Tibial artery (tissue), 4 donors: ENCODE measurements at regions of chr22 and their contacts with region 1.

Region 1: DNA sequence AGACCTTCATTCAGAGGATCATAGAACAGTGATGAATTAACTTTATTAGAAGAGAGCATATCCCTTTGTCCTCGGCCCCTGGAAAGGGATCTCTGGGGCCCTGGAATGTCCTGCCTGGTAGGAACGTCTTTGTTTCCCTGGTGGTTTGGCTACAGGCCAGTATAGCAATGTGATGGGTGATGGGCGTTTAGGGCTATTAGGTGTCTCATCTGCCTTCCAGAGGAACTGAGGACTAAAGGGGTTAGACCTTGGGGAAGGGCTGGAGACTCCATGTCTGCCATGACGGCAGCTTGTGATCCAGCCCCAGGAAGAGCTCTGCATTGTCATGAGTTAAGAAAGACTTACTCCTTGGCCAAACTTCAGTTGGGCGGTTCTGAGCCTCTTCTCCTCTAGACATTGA is 9.0 kb downstream of the APOL4 start:
- DNase-seq: no peak
- H3K4me3 ChIP-seq: no peak overlapping the region
- H3K27ac ChIP-seq: no peak overlapping the region
- H3K4me1 ChIP-seq: peaks cover 0 to 12% (median 4%) of the 10 kb centered on the region in 4 donors
- H3K27me3 ChIP-seq: no peaks in the 10 kb centered on the region
- CTCF ChIP-seq: no peak

Region 2: GRCh38 chr22:36017651-36018091 is 174.9 kb before region 1 on chr22:
- intact Hi-C with region 1: no loop called
- DNase-seq: no peak
- H3K4me3 ChIP-seq: no peak overlapping the region
- H3K27ac ChIP-seq: no peak overlapping the region
- H3K4me1 ChIP-seq: peaks cover 0 to 51% (median 22%) of the 10 kb centered on the region in 4 donors
- H3K27me3 ChIP-seq: no peaks in the 10 kb centered on the region
- CTCF ChIP-seq: no peak

Region 3: GRCh38 chr22:36180038-36180880 is 12.3 kb before region 1 on chr22:
- intact Hi-C with region 1: no loop called
- DNase-seq: peak; percentile 89 to 91
- H3K4me3 ChIP-seq: no peak overlapping the region
- H3K27ac ChIP-seq: no peak overlapping the region
- H3K4me1 ChIP-seq: peaks cover 0 to 3% (median 0%) of the 10 kb centered on the region in 4 donors
- H3K27me3 ChIP-seq: no peaks in the 10 kb centered on the region
- CTCF ChIP-seq: peak; percentile 89 to 94

Region 4: DNA sequence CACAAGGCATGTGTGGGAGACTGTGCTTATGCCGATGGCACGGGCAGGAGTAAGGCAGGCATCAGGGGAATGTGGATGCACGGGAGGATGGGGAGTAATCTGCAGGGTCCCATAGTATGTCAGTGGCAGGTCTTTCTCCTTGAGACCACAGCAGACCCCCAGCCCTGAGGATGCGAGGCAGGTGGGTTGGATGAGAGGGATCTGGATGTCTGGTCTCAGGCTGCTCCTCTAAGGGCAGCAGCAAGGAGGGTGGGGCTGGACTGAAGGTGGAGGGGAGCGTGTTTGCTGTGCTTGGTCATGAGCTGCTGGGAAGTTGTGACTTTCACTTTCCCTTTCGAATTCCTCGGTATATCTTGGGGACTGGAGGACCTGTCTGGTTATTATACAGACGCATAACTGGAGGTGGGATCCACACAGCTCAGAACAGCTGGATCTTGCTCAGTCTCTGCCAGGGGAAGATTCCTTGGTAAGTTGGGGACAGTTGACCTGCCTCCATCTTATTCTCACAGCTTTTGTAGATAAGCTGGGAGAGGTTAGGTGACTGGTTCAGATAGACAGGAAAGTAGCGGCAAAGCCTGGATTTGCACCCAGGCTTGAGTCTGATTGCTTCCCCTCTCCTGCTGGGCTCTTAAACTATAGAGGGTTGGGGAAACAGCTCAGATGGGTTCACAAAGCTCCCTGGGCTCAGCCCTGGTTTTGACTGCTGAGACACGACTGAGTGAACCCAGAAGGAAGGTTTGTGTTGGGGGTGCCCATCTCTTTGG is 60.4 kb after region 1 on chr22 and contains the start of gene APOL1:
- intact Hi-C with region 1: no loop called
- DNase-seq: no peak
- H3K4me3 ChIP-seq: peak within 1 kb of the TSS; percentile 37 to 51
- H3K27ac ChIP-seq: peak within 1 kb of the TSS; percentile 65 to 67
- H3K4me1 ChIP-seq: peaks cover 0 to 22% (median 16%) of the 10 kb centered on the region in 4 donors
- H3K27me3 ChIP-seq: no peaks in the 10 kb centered on the region
- CTCF ChIP-seq: no peak

Region 5: GRCh38 chr22:36491155-36491554 is 298.6 kb after region 1 on chr22:
- intact Hi-C with region 1: loop called (anchors 2 kb)
- DNase-seq: no peak
- H3K4me3 ChIP-seq: no peak overlapping the region
- H3K27ac ChIP-seq: no peak overlapping the region
- H3K4me1 ChIP-seq: no peaks in the 10 kb centered on the region
- H3K27me3 ChIP-seq: no peaks in the 10 kb centered on the region
- CTCF ChIP-seq: no peak